ENCODE measurements at regions of chr12 and their contacts with region 1.

Region 1: DNA sequence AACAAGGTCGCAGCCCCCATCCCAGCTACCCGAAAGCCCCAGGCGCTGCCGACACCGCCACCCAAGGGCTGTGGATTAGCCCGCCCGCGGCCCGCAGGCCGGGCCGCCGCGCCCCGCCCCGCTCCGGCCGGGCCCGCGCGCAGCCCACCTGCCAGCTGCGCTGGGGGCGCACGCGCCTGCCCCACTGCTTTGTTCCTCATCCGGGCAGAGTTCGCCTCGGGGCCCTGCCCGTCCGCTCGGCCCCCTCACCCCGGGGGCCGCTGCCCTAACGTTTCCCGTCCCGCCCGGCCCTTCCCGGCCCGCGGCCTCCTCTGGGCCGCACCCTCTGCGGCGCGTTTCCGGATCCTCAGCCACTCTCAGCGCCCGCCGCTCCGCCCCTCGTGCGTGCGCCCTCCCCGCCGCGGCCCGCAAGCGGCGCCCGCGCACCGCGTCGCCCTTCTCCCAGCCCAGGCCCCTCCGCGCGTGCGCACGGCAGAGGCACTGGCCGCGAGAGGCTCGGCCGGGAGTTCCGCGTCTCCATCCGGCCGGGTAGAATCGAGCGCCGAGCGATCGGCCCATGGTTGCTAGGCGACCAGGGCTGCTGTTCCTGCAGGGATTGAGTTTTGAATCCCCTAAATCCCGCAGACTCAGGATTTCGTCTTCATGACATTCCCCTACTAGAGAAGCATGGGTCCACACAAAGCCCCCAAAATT is at the start of gene PRDM4:
- DNase-seq: peak; percentile 96
- ATAC-seq: peak; percentile 99
- total RNA-seq, gene PRDM4: 14.0 to 14.8 TPM

Region 2: DNA sequence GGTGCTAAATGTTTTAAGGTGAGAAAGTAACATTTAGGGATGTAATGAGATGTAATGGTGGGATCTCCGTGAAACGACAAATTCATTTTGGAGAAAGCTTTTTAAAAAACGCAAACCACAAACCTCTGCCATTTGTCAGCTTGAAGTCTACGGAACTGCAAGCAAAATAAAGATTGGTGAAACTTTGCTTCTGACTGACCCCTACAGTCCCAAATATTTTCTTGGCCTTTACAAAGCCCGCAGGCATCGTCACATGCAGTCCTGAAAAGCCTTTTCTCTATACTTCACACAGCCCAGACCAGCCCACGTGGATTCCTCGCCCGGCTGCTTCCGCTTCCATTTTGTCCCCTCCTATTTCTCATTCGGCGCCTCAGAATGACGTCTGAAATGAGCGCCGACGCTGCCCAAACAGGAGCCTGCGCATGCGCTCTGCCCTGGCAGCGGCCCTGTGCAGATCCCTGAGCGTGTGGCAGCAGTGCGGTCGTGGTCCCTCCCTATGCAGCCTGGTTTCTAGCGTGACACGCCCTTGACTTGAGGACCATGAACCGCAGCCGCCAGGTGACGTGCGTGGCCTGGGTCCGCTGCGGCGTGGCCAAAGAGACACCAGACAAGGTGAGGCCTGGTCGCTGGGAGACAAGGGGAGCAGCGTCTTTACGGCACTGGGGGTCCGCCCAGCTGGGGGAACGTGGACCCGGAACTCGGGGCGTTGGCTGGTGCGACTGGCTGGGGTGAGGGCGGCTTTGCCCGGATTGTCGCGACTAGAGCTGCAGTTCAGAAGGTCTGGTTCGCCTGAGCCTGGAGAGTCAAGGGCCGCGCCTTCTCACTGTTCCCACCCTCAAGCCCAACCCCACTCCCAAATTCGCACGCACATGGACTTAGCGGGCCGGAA is 75.4 kb before region 1 on chr12 and contains the start of gene PWP1:
- intact Hi-C with region 1: loop called in 1 of 2 experiments (anchors 5 kb)
- DNase-seq: peak; percentile 97
- ATAC-seq: peak; percentile 97
- total RNA-seq, gene PWP1: 13.0 to 19.1 TPM

Region 3: GRCh38 chr12:107884769-107885694 is 124.1 kb after region 1 on chr12:
- intact Hi-C with region 1: loop called in 1 of 2 experiments (anchors 2 kb)
- DNase-seq: peak; percentile 37
- ATAC-seq: peak in 1 of 2 donors; percentile 56